Common myeloid progenitor, CD34-positive (primary cell): ENCODE measurements at regions of chr5 and their contacts with region 1.

Region 1: DNA sequence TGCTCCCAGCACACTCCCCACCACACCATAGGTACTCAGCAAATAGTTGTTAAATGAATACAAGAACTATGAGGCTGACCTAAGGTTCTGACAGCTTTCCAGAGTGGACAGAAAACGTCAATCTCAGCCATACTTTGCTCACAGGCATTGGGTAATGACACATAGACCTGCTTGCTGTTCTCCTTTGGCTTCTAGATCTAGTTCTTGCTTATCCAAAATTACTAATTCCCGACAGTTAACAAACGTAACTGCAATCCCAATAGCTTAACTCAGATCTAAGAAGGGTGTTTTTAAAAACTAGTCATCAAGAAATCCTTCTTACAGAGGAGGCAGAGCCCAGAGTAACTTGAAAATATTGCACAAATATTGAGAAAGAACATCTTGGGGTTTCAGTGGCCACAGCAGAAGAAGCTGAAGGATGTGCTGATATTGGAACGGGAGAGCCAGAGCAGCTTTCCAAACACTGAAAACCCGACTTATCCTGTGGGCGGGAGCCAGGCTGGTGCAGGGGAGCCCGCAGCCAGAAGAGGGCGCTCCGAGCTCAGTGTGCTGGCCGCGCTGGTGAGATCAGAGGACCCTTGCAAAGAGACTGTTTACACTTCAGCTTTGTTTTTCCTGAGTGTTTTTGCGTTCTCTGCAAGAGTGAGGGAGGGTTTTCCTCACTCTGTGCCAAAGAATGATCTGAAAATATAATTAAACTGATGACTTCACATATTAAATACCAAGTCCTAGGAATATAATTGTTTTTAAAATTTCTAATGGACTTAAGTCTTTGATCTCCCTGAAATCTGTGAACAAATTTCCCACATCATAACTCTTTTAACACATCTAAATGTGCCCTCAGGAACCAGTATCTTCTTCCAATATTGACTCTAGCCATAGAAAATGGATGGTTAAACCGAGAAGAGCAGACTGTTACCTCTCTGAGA is 30.3 kb downstream of the FGF1 start:
- DNase-seq: peak; percentile 51 to 67 (median 66)
- H3K4me3 ChIP-seq: no peak overlapping the region
- H3K27ac ChIP-seq: no peak overlapping the region
- H3K4me1 ChIP-seq: no peaks in the 10 kb centered on the region
- H3K27me3 ChIP-seq: peaks cover 0 to 8% (median 2%) of the 10 kb centered on the region in 5 experiments

Region 2: DNA sequence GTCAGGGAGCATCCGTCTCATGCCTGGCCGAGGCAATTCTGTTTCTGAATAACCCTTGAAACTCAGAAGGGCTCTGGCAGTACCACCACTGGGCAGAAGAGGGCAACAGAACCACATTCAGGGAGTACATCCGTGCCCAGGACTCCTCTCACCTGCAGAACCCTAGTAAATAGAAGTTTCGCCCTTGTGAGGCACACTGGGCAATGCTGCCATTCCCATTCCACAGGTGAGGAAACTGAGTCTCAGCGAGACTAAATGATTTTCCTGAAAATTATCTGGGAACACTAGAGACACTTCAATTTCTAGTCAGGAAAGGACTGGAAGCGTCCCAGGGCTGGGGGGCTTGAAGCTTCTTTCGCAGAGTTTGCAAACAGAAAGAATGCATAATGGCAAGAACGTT is 44.4 kb before region 1 on chr5:
- CTCF ChIA-PET with region 1: interaction called, 15 read pairs
- POLR2A ChIA-PET with region 1: no interaction called
- DNase-seq: peak; percentile 45 to 75 (median 65)
- H3K4me3 ChIP-seq: no peak overlapping the region
- H3K27ac ChIP-seq: no peak overlapping the region
- H3K4me1 ChIP-seq: no peaks in the 10 kb centered on the region
- H3K27me3 ChIP-seq: peaks cover 0 to 10% (median 3%) of the 10 kb centered on the region in 5 experiments

Region 3: GRCh38 chr5:142644640-142645361 is 10.8 kb before region 1 on chr5:
- CTCF ChIA-PET with region 1: interaction called, 36 read pairs
- POLR2A ChIA-PET with region 1: no interaction called
- DNase-seq: no peak
- H3K4me3 ChIP-seq: no peak overlapping the region
- H3K27ac ChIP-seq: no peak overlapping the region
- H3K4me1 ChIP-seq: no peaks in the 10 kb centered on the region
- H3K27me3 ChIP-seq: peaks cover 0 to 4% (median 0%) of the 10 kb centered on the region in 5 experiments

Region 4: GRCh38 chr5:142692321-142692894 is 36.8 kb after region 1 on chr5:
- CTCF ChIA-PET with region 1: interaction called, 48 read pairs
- POLR2A ChIA-PET with region 1: no interaction called
- DNase-seq: peak; percentile 33 to 70 (median 62)
- H3K4me3 ChIP-seq: no peak overlapping the region
- H3K27ac ChIP-seq: no peak overlapping the region
- H3K4me1 ChIP-seq: no peaks in the 10 kb centered on the region
- H3K27me3 ChIP-seq: no peaks in the 10 kb centered on the region

Region 5: DNA sequence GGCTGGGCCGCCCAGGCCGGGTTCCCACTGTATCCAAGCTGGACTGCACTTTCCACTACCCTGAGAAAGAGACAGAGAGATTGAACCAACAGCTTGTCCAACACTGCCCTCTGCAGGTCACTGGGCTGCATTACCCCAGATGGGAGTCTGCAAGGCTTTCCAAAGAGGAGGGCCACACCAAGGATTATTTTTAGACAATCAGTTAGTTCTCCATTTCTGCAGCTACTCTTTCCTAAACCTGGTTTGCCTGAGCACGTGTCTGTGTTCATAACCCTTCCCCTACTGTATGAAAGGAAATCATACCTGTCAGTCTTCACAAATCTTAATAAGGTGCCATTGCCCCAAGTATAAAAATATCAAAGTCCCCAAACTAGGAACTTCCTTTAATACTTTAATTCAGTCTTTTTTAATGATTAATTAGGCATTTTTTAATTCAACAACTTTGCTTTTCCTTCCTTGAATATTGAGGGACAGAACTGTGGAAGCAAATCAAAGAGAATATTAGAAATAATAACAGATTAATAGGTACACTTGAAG is 43.6 kb after region 1 on chr5:
- CTCF ChIA-PET with region 1: interaction called, 48 read pairs
- POLR2A ChIA-PET with region 1: no interaction called
- DNase-seq: peak; percentile 74 to 88 (median 82)
- H3K4me3 ChIP-seq: no peak overlapping the region
- H3K27ac ChIP-seq: no peak overlapping the region
- H3K4me1 ChIP-seq: no peaks in the 10 kb centered on the region
- H3K27me3 ChIP-seq: no peaks in the 10 kb centered on the region